ENCODE measurements at regions of chr17 and their contacts with region 1.

Region 1: DNA sequence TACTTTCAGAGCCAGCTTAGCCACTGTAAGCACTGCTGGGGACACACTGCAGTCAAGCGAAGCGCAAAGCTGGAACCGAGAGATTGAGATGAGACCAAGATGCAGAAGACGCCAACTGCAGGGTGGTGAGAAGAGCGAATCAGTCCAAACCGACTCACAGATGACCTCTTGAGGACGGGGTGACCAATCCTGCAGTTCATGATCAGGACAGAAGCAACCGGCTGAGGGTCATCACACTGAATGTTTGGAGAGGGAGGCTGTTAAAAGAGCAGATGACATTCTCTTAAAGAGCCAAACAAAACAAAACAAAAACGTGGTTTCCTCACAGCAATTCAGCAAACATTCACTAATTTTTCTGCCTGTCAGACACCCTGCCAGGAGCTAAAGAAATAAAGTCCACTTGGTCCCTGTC is 8.5 kb downstream of the HASPIN start:
- DNase-seq: peak in 1 of 2 experiments; percentile 46
- ATAC-seq: peak; percentile 54 to 63; a peak in 5 of 6 replicates
- H3K4me3 ChIP-seq: no peak overlapping the region
- H3K27ac ChIP-seq: no peak overlapping the region
- H3K4me1 ChIP-seq: 0 out of 3 replicates have a peak, but pooled peaks cover 4% of the 10 kb centered on the region
- CTCF ChIP-seq: no peak
- EP300 ChIP-seq: no peak
- POLR2A ChIP-seq: no peak
- RAD21 ChIP-seq: peak in 1 of 2 experiments; percentile 18; a peak in 1 of 5 replicates

Region 2: GRCh38 chr17:3744032-3744431 is 11.8 kb after region 1 on chr17:
- CTCF ChIA-PET with region 1: interaction called, 176 read pairs
- POLR2A ChIA-PET with region 1: no interaction called
- DNase-seq: peak in 1 of 2 experiments; percentile 52
- ATAC-seq: no peak; a peak in 1 of 6 replicates
- H3K4me3 ChIP-seq: no peak overlapping the region
- H3K27ac ChIP-seq: no peak overlapping the region
- H3K4me1 ChIP-seq: peaks cover 8% of the 10 kb centered on the region; the same call in 2 of the 3 replicates
- CTCF ChIP-seq: no peak
- EP300 ChIP-seq: no peak
- POLR2A ChIP-seq: no peak
- RAD21 ChIP-seq: no peak

Measured in A549 (cell line).